ENCODE measurements at regions of chr17 and their contacts with region 1.

Region 1: DNA sequence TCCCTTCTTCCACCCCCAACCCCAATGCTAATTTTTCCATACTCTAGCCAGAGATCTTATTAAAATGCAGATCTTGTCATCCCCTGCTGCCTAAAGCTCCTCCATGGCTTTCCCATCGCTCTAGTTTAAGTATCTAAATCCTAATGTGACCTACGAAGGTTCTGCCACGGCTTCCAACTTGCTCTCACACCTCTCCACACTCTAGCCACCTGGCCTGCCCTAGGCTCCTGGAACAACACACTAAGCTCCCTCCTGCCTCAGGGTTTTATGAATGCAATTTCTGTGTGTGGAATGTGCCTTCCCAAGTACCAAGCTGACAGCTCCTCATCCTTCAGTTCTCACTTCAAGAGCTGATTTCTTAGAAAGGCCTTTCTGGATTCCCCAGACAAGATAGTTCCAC is 16.6 kb downstream of the NXPH3 start:
- DNase-seq: no peak
- ATAC-seq: no peak
- H3K4me3 ChIP-seq: no peak overlapping the region
- H3K27ac ChIP-seq: no peak overlapping the region
- H3K4me1 ChIP-seq: peaks cover 10% of the 10 kb centered on the region
- H3K27me3 ChIP-seq: no peaks in the 10 kb centered on the region
- CTCF ChIP-seq: no peak
- POLR2A ChIP-seq: no peak
- RAD21 ChIP-seq: no peak

Region 2: DNA sequence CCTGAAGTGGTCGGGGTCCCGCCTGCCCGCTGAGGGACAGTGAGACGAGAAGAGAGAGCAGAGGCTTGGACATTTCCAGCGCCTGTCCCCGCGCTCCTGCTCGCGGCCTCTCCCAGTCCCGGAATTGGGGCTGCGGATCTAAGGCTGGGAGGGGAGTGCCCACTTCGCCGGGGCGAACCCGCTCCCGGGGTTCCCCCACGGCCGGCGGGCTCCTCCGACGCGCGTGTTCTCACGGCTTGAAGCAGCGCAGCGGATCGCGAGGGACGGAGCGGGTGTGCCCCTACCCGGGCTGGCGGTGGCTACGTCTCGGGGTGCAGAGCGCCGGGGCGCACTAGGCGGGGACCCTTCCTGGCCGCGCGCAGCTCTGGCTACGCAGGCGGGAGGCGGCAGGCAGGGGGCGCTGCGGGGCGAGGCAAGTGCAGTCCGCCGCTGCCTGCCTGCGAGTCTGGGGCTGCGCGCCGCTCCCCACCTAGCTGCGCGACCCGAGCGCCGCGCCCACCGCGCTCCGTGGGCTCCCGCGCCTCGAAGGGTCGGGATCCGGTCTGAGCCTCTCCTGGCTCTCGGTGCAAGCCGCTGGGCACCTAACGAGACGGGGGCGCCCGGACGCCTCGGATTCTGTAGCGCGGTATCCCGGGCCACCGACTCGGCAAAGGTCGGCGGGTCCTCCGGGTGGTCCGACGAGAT is 95.9 kb before region 1 on chr17:
- CTCF ChIA-PET with region 1: no interaction called
- POLR2A ChIA-PET with region 1: no interaction called
- dilution Hi-C with region 1: no loop called
- in situ Hi-C with region 1: no loop called
- intact Hi-C with region 1: no loop called
- DNase-seq: peak; percentile 28
- ATAC-seq: peak; percentile 85
- H3K4me3 ChIP-seq: no peak overlapping the region; the same call in 1 of the 2 replicates
- H3K27ac ChIP-seq: no peak overlapping the region
- H3K4me1 ChIP-seq: peaks cover 7% of the 10 kb centered on the region; the same call in 1 of the 2 replicates
- H3K27me3 ChIP-seq: peaks cover 85% of the 10 kb centered on the region
- CTCF ChIP-seq: peak; percentile 61
- POLR2A ChIP-seq: no peak
- RAD21 ChIP-seq: peak; percentile 49; the same call in 1 of the 2 replicates

Region 3: GRCh38 chr17:49624896-49625295 is 32.6 kb after region 1 on chr17:
- CTCF ChIA-PET with region 1: no interaction called
- POLR2A ChIA-PET with region 1: no interaction called
- dilution Hi-C with region 1: no loop called
- in situ Hi-C with region 1: no loop called
- intact Hi-C with region 1: loop called (anchors 5 kb)
- DNase-seq: peak; percentile 62
- ATAC-seq: peak; percentile 81
- H3K4me3 ChIP-seq: no peak overlapping the region
- H3K27ac ChIP-seq: no peak overlapping the region
- H3K4me1 ChIP-seq: peaks cover 4% of the 10 kb centered on the region; the same call in 1 of the 2 replicates
- H3K27me3 ChIP-seq: no peaks in the 10 kb centered on the region
- CTCF ChIP-seq: no peak
- POLR2A ChIP-seq: no peak
- RAD21 ChIP-seq: no peak

Region 4: DNA sequence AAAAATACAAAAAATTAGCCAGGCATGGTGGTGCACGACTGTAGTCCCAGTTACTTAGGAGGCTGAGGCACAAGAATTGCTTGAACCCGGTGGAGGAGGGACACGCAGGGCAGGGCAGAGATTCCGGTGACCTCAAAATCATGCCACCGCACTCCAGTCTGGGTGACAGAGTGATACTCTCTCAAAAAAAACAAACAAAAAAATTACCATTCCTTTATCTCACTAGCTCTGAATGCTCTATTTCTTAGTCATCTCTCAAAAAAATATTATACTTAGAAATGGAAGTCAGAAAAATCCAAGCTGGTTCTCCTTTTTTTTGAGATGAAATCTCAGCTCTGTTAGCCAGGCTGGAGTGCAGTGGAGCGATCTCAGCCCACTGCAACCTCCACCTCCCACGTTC is 44.8 kb after region 1 on chr17:
- CTCF ChIA-PET with region 1: no interaction called
- POLR2A ChIA-PET with region 1: interaction called, 23 read pairs
- dilution Hi-C with region 1: no loop called
- in situ Hi-C with region 1: no loop called
- intact Hi-C with region 1: no loop called
- DNase-seq: peak; percentile 50
- ATAC-seq: peak; percentile 92
- H3K4me3 ChIP-seq: no peak overlapping the region
- H3K27ac ChIP-seq: no peak overlapping the region; the same call in 1 of the 2 replicates
- H3K4me1 ChIP-seq: peaks cover 9% of the 10 kb centered on the region
- H3K27me3 ChIP-seq: no peaks in the 10 kb centered on the region
- CTCF ChIP-seq: no peak
- POLR2A ChIP-seq: no peak
- RAD21 ChIP-seq: no peak